Left ventricle myocardium superior (tissue), 1 donor: ENCODE measurements at regions of chr10 and their contacts with region 1.

Region 1: GRCh38 chr10:23439946-23440729 is 1.3 kb downstream of the OTUD1 start:
- DNase-seq: peak; percentile 43
- ATAC-seq: no peak

Region 2: GRCh38 chr10:23344241-23344841 is 95.8 kb before region 1 on chr10 and contains the start of gene C10orf67:
- intact Hi-C with region 1: loop called (anchors 10 kb)
- DNase-seq: peak; percentile 71
- ATAC-seq: peak; percentile 78
- total RNA-seq, gene C10orf67: 0.62 TPM

Region 3: DNA sequence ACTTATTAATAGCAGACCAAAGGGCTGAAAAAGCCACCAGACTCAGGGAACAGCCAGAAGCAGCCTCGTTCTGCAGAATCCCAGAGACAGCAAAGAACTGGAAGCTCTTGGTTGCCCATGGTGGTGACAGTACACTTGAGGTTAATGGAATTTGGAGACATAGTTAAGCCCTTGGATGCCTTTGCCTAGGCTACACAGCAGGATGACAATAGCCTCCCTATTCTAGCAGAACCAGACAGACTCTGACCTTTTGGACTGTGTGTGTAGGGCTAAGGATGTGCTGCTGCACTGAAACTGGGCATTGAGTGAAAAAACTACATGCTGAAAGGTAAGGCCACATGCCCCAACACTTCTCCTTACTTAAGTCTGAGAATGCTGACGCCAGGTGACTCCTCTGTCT is 21.4 kb after region 1 on chr10:
- intact Hi-C with region 1: loop called (anchors 1 kb)
- DNase-seq: no peak
- ATAC-seq: peak; percentile 91